A673 (cell line): ENCODE measurements at regions of chr2 and their contacts with region 1.

Region 1: DNA sequence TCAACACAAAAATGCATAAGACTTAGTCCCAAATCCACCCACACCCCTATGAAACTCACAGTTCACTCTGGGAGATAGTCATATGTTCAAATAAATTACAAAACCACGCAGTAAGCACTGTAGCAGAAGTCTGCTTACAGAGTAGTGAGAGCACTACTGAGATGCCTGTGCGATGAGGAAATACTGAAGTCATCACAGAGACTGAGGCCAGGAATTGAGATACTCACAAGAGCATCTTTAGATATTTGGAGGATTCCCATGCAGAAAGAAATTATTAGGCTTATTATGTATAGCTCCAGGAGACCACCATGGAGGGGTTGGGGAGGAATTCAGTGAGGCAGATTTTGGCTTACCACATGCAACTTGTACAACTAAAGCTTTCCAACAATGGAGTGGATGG is 82.3 kb downstream of the ANTXR1 start:
- DNase-seq: peak; percentile 44
- H3K4me3 ChIP-seq: no peak overlapping the region
- H3K27ac ChIP-seq: peak overlapping the region; percentile 80
- H3K4me1 ChIP-seq: peaks cover 60% of the 10 kb centered on the region
- H3K27me3 ChIP-seq: no peaks in the 10 kb centered on the region
- CTCF ChIP-seq: no peak

Region 2: DNA sequence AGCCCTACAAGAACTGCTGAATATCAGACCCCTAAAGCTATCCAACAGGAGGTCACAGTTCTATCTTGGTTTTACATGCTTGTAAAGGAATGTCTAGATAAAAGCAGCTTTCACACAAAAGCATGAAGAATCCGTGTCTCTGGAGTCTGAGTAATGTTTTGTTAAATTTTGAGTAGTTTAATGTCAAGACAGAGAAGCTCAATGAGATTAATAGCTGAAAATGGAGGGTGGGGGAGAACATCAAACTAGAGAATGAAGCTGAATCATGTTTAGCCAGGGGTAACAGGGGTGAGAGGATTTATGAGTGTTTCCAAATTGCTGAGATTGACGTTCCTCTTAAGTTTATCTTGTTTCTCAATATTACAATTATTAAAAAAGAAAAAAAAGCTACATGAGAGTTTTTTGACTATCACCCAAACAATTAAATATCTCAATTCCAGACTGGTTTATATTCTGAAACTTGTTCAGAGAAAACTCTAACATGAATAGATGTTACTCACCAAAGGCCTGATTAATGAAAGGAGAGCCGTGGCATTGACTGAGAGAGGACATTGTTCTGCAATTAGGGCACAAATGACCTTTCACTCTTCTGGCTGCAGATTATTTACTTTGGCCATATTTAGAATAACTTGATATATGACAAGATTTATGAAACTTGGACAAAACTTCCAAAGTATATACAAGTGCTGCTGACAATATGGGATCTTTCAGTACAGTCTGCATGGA is 1964.6 kb before region 1 on chr2:
- CTCF ChIA-PET with region 1: no interaction called
- POLR2A ChIA-PET with region 1: interaction called, 20 read pairs
- intact Hi-C with region 1: no loop called
- DNase-seq: no peak
- H3K4me3 ChIP-seq: no peak overlapping the region
- H3K27ac ChIP-seq: no peak overlapping the region
- H3K4me1 ChIP-seq: peaks cover 19% of the 10 kb centered on the region
- H3K27me3 ChIP-seq: no peaks in the 10 kb centered on the region
- CTCF ChIP-seq: no peak

Region 3: DNA sequence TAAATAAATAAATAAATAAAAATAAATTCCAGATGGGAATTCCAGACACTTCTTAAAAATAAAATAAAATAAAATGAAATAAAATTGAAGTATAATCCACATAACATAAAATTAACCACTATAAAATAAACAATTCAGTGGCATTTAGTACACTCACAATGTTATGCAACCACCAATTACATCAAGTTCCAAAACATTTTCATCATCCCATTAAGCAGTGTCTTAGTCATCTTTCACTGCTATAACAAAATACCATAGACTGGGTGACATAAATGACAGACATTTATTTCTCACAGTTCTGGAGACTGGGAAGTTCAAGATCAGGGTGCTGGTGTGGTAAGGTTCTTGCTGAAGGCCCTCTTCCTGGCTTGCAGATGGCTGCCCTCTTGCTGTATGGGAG is 474.5 kb before region 1 on chr2:
- CTCF ChIA-PET with region 1: no interaction called
- POLR2A ChIA-PET with region 1: no interaction called
- intact Hi-C with region 1: loop called (anchors 5 kb)
- DNase-seq: peak; percentile 47
- H3K4me3 ChIP-seq: no peak overlapping the region
- H3K27ac ChIP-seq: peak overlapping the region; percentile 84
- H3K4me1 ChIP-seq: no peaks in the 10 kb centered on the region
- H3K27me3 ChIP-seq: no peaks in the 10 kb centered on the region
- CTCF ChIP-seq: no peak

Region 4: GRCh38 chr2:68925295-68925896 is 169.9 kb before region 1 on chr2:
- CTCF ChIA-PET with region 1: no interaction called
- POLR2A ChIA-PET with region 1: no interaction called
- intact Hi-C with region 1: no loop called
- DNase-seq: peak; percentile 62
- H3K4me3 ChIP-seq: no peak overlapping the region
- H3K27ac ChIP-seq: no peak overlapping the region
- H3K4me1 ChIP-seq: no peaks in the 10 kb centered on the region
- H3K27me3 ChIP-seq: no peaks in the 10 kb centered on the region
- CTCF ChIP-seq: peak; percentile 80

Region 5: GRCh38 chr2:68943581-68944568 is 151.4 kb before region 1 on chr2:
- CTCF ChIA-PET with region 1: no interaction called
- POLR2A ChIA-PET with region 1: no interaction called
- intact Hi-C with region 1: loop called (anchors 5 kb)
- DNase-seq: peak; percentile 83
- H3K4me3 ChIP-seq: no peak overlapping the region
- H3K27ac ChIP-seq: no peak overlapping the region
- H3K4me1 ChIP-seq: peaks cover 5% of the 10 kb centered on the region
- H3K27me3 ChIP-seq: no peaks in the 10 kb centered on the region
- CTCF ChIP-seq: peak; percentile 81

Region 6: DNA sequence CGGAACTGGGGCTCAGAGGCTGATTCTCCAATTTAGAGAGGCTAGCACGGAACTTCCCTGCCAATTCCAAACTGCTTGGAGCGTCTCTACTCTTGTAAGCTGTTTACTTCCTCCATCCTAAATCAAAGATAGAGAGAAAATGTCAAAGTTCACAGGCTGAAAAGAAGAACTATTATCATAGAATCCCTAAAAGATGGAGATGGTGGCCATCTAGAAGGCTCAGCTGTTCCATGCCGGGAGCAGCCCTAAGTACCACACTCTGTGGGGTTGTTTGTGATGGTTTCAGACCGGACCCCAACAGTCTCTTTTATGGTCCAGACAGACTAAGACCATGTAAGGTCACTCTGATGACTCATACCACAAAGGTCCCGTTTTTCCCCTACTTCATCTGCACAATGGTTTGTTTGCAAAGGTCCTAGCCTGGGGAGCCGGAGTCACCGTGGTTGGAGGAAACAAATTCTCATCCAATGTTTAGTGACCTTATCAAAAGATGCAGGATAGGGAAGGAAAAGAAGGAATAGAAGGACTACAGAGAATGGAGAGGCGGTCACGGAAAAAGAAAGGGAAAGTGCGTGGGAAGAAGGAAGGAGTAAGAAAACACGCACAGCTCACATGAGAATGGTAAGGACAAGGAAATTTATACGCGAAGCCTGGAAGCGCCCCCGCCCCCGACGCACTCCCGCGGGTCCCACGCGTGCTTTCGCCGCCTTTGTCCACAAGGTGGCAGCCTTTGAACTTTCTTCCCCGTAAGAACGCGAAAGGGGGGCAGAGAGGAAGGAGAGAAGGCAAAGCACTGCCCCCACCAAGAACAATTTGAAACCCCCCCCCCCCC is 82.8 kb before region 1 on chr2:
- CTCF ChIA-PET with region 1: interaction called, 6 read pairs
- POLR2A ChIA-PET with region 1: no interaction called
- intact Hi-C with region 1: loop called (anchors 2 kb)
- DNase-seq: peak; percentile 88
- H3K4me3 ChIP-seq: peak overlapping the region; percentile 95
- H3K27ac ChIP-seq: peak overlapping the region; percentile 86
- H3K4me1 ChIP-seq: peaks cover 41% of the 10 kb centered on the region
- H3K27me3 ChIP-seq: no peaks in the 10 kb centered on the region
- CTCF ChIP-seq: peak; percentile 89

Region 7: GRCh38 chr2:69306822-69307578 is 211.7 kb after region 1 on chr2:
- CTCF ChIA-PET with region 1: interaction called, 3 read pairs
- POLR2A ChIA-PET with region 1: no interaction called
- intact Hi-C with region 1: loop called (anchors 2 kb)
- DNase-seq: peak; percentile 93
- H3K4me3 ChIP-seq: peak overlapping the region; percentile 72
- H3K27ac ChIP-seq: peak overlapping the region; percentile 53
- H3K4me1 ChIP-seq: peaks cover 9% of the 10 kb centered on the region
- H3K27me3 ChIP-seq: no peaks in the 10 kb centered on the region
- CTCF ChIP-seq: peak; percentile 81